B cell (primary cell): ENCODE measurements at regions of chr6 and their contacts with region 1.

Region 1: GRCh38 chr6:16128759-16129622 is at the start of gene MYLIP:
- DNase-seq: peak; percentile 98
- ATAC-seq: peak; percentile 86
- H3K4me3 ChIP-seq: peak within 1 kb of the TSS; percentile 82 to 99 (median 94)
- H3K4me3 Mint-ChIP-seq: peak within 1 kb of the TSS; percentile 96
- H3K27ac ChIP-seq: peak within 1 kb of the TSS; percentile 92 to 95
- H3K27ac Mint-ChIP-seq: peak within 1 kb of the TSS; percentile 94
- H3K4me1 ChIP-seq: peaks cover 28 to 44% of the 10 kb centered on the region in 2 donors
- H3K4me1 Mint-ChIP-seq: peaks cover 50% of the 10 kb centered on the region
- H3K27me3 ChIP-seq: no peaks in the 10 kb centered on the region
- H3K27me3 Mint-ChIP-seq: peaks cover 6% of the 10 kb centered on the region
- CTCF ChIP-seq: peak; percentile 65
- total RNA-seq, gene MYLIP: 37.3 and 40.6 TPM in 2 replicates

Region 2: GRCh38 chr6:15662326-15663129 is 466.5 kb before region 1 on chr6 and contains the start of gene DTNBP1:
- CTCF ChIA-PET with region 1: interaction called, 6 read pairs
- POLR2A ChIA-PET with region 1: interaction called, 9 read pairs
- intact Hi-C with region 1: loop called (anchors 1 kb)
- DNase-seq: peak; percentile 95
- ATAC-seq: peak; percentile 73
- H3K4me3 ChIP-seq: peak within 1 kb of the TSS; percentile 50 to 97 (median 78)
- H3K4me3 Mint-ChIP-seq: peak within 1 kb of the TSS; percentile 94
- H3K27ac ChIP-seq: peak within 1 kb of the TSS; percentile 91 to 97
- H3K27ac Mint-ChIP-seq: peak within 1 kb of the TSS; percentile 95
- H3K4me1 ChIP-seq: peaks cover 36 to 49% of the 10 kb centered on the region in 2 donors
- H3K4me1 Mint-ChIP-seq: peaks cover 51% of the 10 kb centered on the region
- H3K27me3 ChIP-seq: no peaks in the 10 kb centered on the region
- H3K27me3 Mint-ChIP-seq: no peaks in the 10 kb centered on the region
- CTCF ChIP-seq: no peak
- total RNA-seq, gene DTNBP1: 73.0 and 73.6 TPM in 2 replicates

Region 3: GRCh38 chr6:15879382-15880261 is 249.4 kb before region 1 on chr6:
- CTCF ChIA-PET with region 1: no interaction called
- POLR2A ChIA-PET with region 1: interaction called, 9 read pairs
- intact Hi-C with region 1: loop called (anchors 5 kb)
- DNase-seq: peak; percentile 60
- ATAC-seq: peak; percentile 75
- H3K4me3 ChIP-seq: no peak overlapping the region
- H3K4me3 Mint-ChIP-seq: peak overlapping the region; percentile 43
- H3K27ac ChIP-seq: peak overlapping the region; percentile 24 to 51
- H3K27ac Mint-ChIP-seq: peak overlapping the region; percentile 71
- H3K4me1 ChIP-seq: peaks cover 25 to 34% of the 10 kb centered on the region in 2 donors
- H3K4me1 Mint-ChIP-seq: peaks cover 44% of the 10 kb centered on the region
- H3K27me3 ChIP-seq: no peaks in the 10 kb centered on the region
- H3K27me3 Mint-ChIP-seq: no peaks in the 10 kb centered on the region
- CTCF ChIP-seq: no peak

Region 4: GRCh38 chr6:16168858-16169257 is 39.9 kb after region 1 on chr6:
- CTCF ChIA-PET with region 1: interaction called, 4 read pairs
- POLR2A ChIA-PET with region 1: no interaction called
- intact Hi-C with region 1: loop called (anchors 5 kb)
- DNase-seq: peak; percentile 49
- ATAC-seq: no peak
- H3K4me3 ChIP-seq: no peak overlapping the region
- H3K4me3 Mint-ChIP-seq: no peak overlapping the region
- H3K27ac ChIP-seq: no peak overlapping the region
- H3K27ac Mint-ChIP-seq: no peak overlapping the region
- H3K4me1 ChIP-seq: no peaks in the 10 kb centered on the region
- H3K4me1 Mint-ChIP-seq: peaks cover 3% of the 10 kb centered on the region
- H3K27me3 ChIP-seq: peaks cover 0 to 3% (median 0%) of the 10 kb centered on the region in 4 experiments
- H3K27me3 Mint-ChIP-seq: peaks cover 15% of the 10 kb centered on the region
- CTCF ChIP-seq: peak; percentile 59

Region 5: GRCh38 chr6:16206595-16207037 is 77.6 kb after region 1 on chr6:
- CTCF ChIA-PET with region 1: interaction called, 41 read pairs
- POLR2A ChIA-PET with region 1: interaction called, 6 read pairs
- intact Hi-C with region 1: loop called (anchors 1 kb)
- DNase-seq: peak; percentile 71
- ATAC-seq: peak; percentile 44
- H3K4me3 ChIP-seq: no peak overlapping the region
- H3K4me3 Mint-ChIP-seq: peak overlapping the region; percentile 67
- H3K27ac ChIP-seq: no peak overlapping the region
- H3K27ac Mint-ChIP-seq: peak overlapping the region; percentile 67
- H3K4me1 ChIP-seq: peaks cover 20 to 21% of the 10 kb centered on the region in 2 donors
- H3K4me1 Mint-ChIP-seq: peaks cover 26% of the 10 kb centered on the region
- H3K27me3 ChIP-seq: peaks cover 0 to 4% (median 2%) of the 10 kb centered on the region in 4 experiments
- H3K27me3 Mint-ChIP-seq: peaks cover 12% of the 10 kb centered on the region
- CTCF ChIP-seq: peak; percentile 98

Region 6: GRCh38 chr6:16228709-16229665 is 100.0 kb after region 1 on chr6:
- CTCF ChIA-PET with region 1: no interaction called
- POLR2A ChIA-PET with region 1: no interaction called
- intact Hi-C with region 1: no loop called
- DNase-seq: no peak
- ATAC-seq: no peak
- H3K4me3 ChIP-seq: no peak overlapping the region
- H3K4me3 Mint-ChIP-seq: no peak overlapping the region
- H3K27ac ChIP-seq: no peak overlapping the region
- H3K27ac Mint-ChIP-seq: no peak overlapping the region
- H3K4me1 ChIP-seq: peaks cover 0 to 5% of the 10 kb centered on the region in 2 donors
- H3K4me1 Mint-ChIP-seq: no peaks in the 10 kb centered on the region
- H3K27me3 ChIP-seq: peaks cover 0 to 20% (median 10%) of the 10 kb centered on the region in 4 experiments
- H3K27me3 Mint-ChIP-seq: peaks cover 25% of the 10 kb centered on the region
- CTCF ChIP-seq: no peak

Region 7: DNA sequence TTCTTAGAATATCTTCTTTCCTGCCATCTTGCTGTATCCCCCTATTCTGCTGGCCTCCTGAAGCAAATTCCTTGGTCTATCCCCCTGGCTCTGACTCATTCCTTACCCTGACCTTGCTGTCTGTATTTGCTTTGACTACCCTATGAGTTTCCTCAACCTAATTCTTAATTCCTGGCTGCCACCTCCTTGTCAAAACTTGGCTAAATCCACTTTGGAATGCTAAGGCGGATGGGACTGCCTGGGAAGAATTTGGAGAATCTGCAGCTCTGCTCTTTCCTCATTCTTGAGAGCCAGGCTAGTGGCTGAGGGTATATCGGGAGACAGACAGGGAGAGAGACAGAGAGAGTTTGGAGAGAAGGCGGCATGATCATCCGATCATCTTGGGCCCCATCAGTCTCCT is 1288.8 kb after region 1 on chr6:
- CTCF ChIA-PET with region 1: no interaction called
- POLR2A ChIA-PET with region 1: no interaction called
- intact Hi-C with region 1: no loop called
- DNase-seq: no peak
- ATAC-seq: no peak
- H3K4me3 ChIP-seq: no peak overlapping the region
- H3K4me3 Mint-ChIP-seq: no peak overlapping the region
- H3K27ac ChIP-seq: no peak overlapping the region
- H3K27ac Mint-ChIP-seq: no peak overlapping the region
- H3K4me1 ChIP-seq: no peaks in the 10 kb centered on the region
- H3K4me1 Mint-ChIP-seq: no peaks in the 10 kb centered on the region
- H3K27me3 ChIP-seq: no peaks in the 10 kb centered on the region
- H3K27me3 Mint-ChIP-seq: peaks cover 17% of the 10 kb centered on the region
- CTCF ChIP-seq: no peak